ENCODE measurements at regions of chr2 and their contacts with region 1.

Region 1: GRCh38 chr2:75787532-75788132 is 76.9 kb upstream of the GCFC2 start:
- DNase-seq: no peak
- ATAC-seq: no peak

Region 2: DNA sequence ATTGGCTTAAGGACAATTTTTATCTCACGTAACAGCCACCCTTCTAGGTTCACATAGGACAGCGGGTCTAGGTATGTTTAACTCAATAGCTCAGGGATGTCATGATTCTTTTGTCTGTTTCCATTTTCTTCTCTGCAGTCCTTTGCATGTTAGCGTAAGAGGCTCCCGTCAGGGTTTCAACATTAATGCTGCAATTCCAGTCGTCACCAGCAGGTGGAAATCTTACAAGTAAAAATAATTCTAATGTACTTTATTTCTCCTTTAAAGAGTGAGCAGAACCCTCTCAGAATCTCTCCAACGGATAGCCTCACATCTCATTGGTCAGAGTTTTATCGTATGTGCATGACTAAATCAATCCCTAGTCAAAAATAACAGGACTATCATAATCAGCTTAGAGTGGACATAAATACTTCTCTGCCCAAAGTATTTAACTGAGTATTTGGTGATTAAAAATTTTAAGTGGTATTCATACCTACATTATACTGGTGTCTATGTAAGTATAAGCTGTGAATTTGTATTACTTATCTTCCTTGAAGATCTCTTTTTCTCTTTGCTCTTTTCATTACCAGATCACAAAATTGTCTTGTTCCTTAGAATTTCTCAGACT is 410.3 kb after region 1 on chr2:
- intact Hi-C with region 1: loop called (anchors 10 kb)
- DNase-seq: no peak
- ATAC-seq: no peak

Region 3: GRCh38 chr2:76599732-76600368 is 812.2 kb after region 1 on chr2:
- intact Hi-C with region 1: loop called (anchors 5 kb)
- DNase-seq: no peak
- ATAC-seq: peak; percentile 81

Measured in Right ventricle myocardium inferior (tissue), 1 donor.